Testis (tissue), 5 donors: ENCODE measurements at regions of chr11 and their contacts with region 1.

Region 1: GRCh38 chr11:100970283-100971164 is 159.1 kb downstream of the PGR start:
- DNase-seq: no peak
- H3K4me3 ChIP-seq: no peak overlapping the region
- H3K27ac ChIP-seq: no peak overlapping the region
- H3K4me1 ChIP-seq: no peaks in the 10 kb centered on the region
- H3K27me3 ChIP-seq: no peaks in the 10 kb centered on the region
- CTCF ChIP-seq: no peak
- POLR2A ChIP-seq: no peak

Region 2: DNA sequence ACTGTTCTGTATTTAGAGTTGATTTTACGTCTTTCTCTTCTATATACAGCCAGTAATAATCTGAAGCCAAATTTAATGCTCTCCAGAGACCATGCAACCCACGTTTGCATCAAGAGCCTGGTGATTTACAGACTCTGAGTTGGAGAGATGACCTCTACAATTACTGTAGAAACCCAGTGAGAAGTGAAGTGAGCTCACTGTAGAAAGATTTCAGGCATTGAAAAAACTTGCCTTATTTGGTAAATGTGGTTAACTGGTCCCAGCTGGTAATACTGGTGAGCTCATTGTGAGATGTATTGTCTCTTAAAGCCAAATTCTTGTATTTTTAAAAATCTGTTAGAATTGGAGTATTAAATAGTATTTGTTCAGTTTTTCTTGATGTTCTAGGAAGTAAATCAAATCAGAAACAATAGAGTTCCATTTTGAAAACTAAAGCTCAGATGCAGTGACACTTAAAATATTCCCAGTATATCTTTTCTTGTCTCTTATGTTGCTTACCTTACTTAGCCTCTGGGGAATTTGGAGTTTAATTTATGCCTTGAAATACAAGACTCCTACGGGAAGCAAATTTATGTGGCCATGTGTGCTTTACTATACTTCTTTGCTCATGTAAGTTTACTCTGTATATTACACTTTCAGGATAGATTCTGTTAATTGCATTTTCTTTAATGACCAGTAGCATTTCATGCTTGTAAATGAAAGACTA is 93.6 kb before region 1 on chr11:
- intact Hi-C with region 1: no loop called
- DNase-seq: no peak
- H3K4me3 ChIP-seq: no peak overlapping the region
- H3K27ac ChIP-seq: no peak overlapping the region
- H3K4me1 ChIP-seq: no peaks in the 10 kb centered on the region
- H3K27me3 ChIP-seq: no peaks in the 10 kb centered on the region
- CTCF ChIP-seq: no peak
- POLR2A ChIP-seq: no peak

Region 3: DNA sequence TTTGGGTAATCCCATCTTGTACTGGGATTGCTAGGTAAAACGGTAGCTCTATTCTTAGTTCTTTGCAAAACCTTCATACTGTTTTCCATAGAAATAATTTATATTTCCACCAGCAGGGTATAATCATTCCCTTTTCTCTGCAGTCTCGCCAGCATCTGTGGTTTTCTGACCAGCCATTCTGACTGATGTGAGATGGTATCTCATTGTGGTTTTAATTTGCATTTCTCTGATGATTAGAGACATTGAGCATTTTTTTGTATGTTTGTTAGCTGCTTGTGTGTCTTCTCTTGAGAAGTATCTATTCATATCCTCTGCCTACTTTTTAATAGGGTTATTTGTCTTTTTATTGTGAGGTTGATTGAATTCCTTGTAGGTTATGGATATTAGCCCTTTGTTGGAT is 61.8 kb before region 1 on chr11:
- intact Hi-C with region 1: no loop called
- DNase-seq: no peak
- H3K4me3 ChIP-seq: no peak overlapping the region
- H3K27ac ChIP-seq: no peak overlapping the region
- H3K4me1 ChIP-seq: no peaks in the 10 kb centered on the region
- H3K27me3 ChIP-seq: no peaks in the 10 kb centered on the region
- CTCF ChIP-seq: no peak
- POLR2A ChIP-seq: no peak

Region 4: DNA sequence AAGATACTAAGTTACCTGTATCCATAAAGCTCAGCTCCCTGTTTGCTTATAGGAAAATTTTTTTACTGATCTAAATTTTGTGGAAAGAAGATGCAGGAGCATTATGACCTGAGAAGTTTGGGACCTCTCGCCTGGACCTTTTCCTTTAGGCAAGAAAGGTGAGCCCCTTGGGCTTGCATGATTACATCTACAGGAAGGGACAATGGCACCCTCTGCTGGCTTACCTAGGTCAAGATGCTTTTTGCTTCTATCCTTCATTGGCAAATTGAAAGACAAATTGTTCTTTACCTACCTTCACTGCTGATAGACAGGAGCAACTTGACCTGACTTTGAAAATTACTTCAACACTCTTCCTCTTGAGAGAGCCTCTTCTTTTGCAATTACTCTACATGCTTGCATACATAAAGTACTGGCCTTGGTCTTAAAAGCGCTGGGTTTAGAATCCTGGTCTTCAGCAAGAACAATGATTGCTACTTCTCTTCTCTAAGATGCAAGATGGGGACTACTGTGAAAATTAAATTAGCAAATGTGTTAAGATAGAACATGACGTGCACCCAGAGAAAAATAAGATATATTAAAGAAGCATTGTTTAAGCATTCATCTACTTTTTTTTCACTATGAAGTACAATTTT is 466.1 kb after region 1 on chr11:
- intact Hi-C with region 1: loop called (anchors 10 kb)
- DNase-seq: peak; percentile 72
- H3K4me3 ChIP-seq: no peak overlapping the region
- H3K27ac ChIP-seq: no peak overlapping the region
- H3K4me1 ChIP-seq: no peaks in the 10 kb centered on the region
- H3K27me3 ChIP-seq: no peaks in the 10 kb centered on the region
- CTCF ChIP-seq: peak; percentile 28 to 62 (median 57)
- POLR2A ChIP-seq: no peak